ENCODE measurements at regions of chr6 and their contacts with region 1.

Region 1: DNA sequence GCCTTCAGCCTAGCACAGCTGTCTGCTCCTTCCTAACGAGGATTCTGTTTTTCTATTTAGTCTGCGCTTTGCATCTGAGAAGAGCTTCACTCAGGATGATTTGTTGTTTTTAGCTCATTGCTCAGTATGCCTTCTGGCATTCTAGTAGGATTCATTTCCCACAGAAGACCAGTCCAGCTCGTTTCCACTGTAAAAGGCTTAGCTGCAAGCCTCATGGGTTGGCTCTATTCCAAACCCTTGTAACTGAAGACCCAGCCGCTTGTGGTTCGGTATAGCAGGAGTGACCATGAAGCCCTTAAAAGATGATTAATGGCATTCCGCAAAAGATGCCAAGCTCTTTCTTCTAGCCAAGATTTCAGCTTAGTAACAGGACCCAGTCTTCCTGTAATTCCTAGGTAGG is 7.2 kb downstream of the ADGRF1 start:
- DNase-seq: peak; percentile 85
- H3K4me3 ChIP-seq: no peak overlapping the region
- H3K27ac ChIP-seq: no peak overlapping the region
- H3K4me1 ChIP-seq: peaks cover 9% of the 10 kb centered on the region
- H3K27me3 ChIP-seq: peaks cover 0 to 2% of the 10 kb centered on the region in 2 experiments
- CTCF ChIP-seq: no peak
- POLR2A ChIP-seq: no peak

Region 2: DNA sequence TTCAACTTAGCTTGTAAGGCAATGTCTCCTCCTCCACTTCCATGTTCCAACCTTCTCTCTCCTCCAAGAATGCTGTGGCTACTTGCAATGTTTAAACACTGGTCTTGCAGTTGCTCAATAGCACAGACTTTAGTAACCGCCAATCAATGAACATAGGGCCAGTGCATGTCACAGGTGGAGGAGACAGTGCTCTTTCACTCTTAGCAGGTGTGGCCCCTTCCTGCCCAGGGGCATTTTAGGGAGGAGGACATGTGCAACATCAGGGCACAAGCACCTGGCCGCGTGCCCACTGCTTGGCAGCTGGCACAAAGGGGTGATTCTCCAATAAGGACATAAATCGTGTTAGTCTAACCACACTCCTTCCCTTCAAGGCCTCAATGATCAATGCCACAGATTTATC is 34.1 kb before region 1 on chr6:
- CTCF ChIA-PET with region 1: no interaction called
- POLR2A ChIA-PET with region 1: no interaction called
- dilution Hi-C with region 1: no loop called
- intact Hi-C with region 1: loop called (anchors 2 kb)
- DNase-seq: no peak
- H3K4me3 ChIP-seq: no peak overlapping the region
- H3K27ac ChIP-seq: no peak overlapping the region
- H3K4me1 ChIP-seq: no peaks in the 10 kb centered on the region
- H3K27me3 ChIP-seq: no peaks in the 10 kb centered on the region
- CTCF ChIP-seq: no peak
- POLR2A ChIP-seq: no peak

Region 3: GRCh38 chr6:47023573-47023972 is 11.3 kb before region 1 on chr6:
- CTCF ChIA-PET with region 1: interaction called, 11 read pairs
- POLR2A ChIA-PET with region 1: no interaction called
- dilution Hi-C with region 1: no loop called
- intact Hi-C with region 1: no loop called
- DNase-seq: no peak
- H3K4me3 ChIP-seq: no peak overlapping the region
- H3K27ac ChIP-seq: no peak overlapping the region
- H3K4me1 ChIP-seq: no peaks in the 10 kb centered on the region
- H3K27me3 ChIP-seq: peaks cover 0 to 8% of the 10 kb centered on the region in 2 experiments
- CTCF ChIP-seq: no peak
- POLR2A ChIP-seq: no peak

Measured in endothelial cell of umbilical vein (primary cell).